ENCODE measurements at regions of chr12 and their contacts with region 1.

Region 1: GRCh38 chr12:28268608-28269229 is 78.5 kb downstream of the CCDC91 start:
- DNase-seq: no peak
- ATAC-seq: no peak
- H3K4me3 ChIP-seq: no peak overlapping the region
- H3K4me3 Mint-ChIP-seq: no peak overlapping the region
- H3K27ac ChIP-seq: no peak overlapping the region
- H3K27ac Mint-ChIP-seq: no peak overlapping the region
- H3K4me1 ChIP-seq: no peaks in the 10 kb centered on the region
- H3K4me1 Mint-ChIP-seq: no peaks in the 10 kb centered on the region
- H3K27me3 ChIP-seq: no peaks in the 10 kb centered on the region
- H3K27me3 Mint-ChIP-seq: no peaks in the 10 kb centered on the region
- CTCF ChIP-seq: no peak

Region 2: GRCh38 chr12:28303192-28303591 is 34.5 kb after region 1 on chr12:
- CTCF ChIA-PET with region 1: no interaction called
- POLR2A ChIA-PET with region 1: no interaction called
- intact Hi-C with region 1: loop called (anchors 5 kb)
- DNase-seq: no peak
- ATAC-seq: no peak
- H3K4me3 ChIP-seq: no peak overlapping the region
- H3K4me3 Mint-ChIP-seq: no peak overlapping the region
- H3K27ac ChIP-seq: no peak overlapping the region
- H3K27ac Mint-ChIP-seq: no peak overlapping the region
- H3K4me1 ChIP-seq: no peaks in the 10 kb centered on the region
- H3K4me1 Mint-ChIP-seq: no peaks in the 10 kb centered on the region
- H3K27me3 ChIP-seq: no peaks in the 10 kb centered on the region
- H3K27me3 Mint-ChIP-seq: no peaks in the 10 kb centered on the region
- CTCF ChIP-seq: no peak